ENCODE measurements at regions of chr14 and their contacts with region 1.

Region 1: DNA sequence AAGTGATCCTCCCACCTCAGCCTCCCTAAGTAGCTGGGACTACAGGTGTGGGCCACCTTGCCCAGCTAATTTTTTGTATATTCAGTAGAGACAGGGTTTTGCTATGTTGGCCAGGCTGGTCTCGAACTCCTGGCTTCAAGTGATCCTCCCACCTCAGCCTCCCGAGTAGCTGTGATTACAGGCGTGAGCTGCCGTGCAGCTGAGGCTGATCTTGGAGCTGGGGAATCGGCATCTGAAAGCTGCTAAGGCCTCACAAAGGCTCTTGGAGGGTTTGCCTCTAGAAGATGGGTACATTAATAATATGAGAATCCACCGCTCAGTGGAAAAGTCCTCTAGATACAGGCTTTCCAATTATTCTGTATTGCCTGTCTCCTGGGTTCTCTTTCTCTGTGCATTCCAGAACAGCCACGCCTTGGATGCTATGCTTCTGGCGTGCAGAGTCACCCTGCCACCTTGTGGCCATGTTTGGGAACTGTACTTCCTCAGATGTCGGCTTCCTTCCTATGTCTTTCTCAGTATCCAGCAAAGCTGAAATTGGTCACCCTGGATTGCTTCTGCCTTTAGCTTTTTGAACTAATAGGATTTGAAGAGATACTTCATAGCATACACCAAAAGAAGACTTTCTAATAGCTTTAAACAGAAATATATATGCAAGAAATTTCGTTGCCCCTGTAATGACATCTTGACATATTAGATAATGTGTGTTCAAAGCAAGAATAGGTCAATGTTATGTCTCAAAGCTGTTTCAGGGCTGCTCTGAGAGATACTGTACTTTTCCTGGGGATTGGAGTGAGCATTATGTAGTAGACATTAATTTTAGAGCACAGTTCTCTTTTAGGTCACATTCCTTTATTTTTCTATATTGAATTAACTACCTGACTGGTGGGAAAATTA is 75.4 kb downstream of the SNAPC1 start:
- DNase-seq: peak; percentile 83
- H3K4me3 ChIP-seq: no peak overlapping the region
- H3K27ac ChIP-seq: no peak overlapping the region
- H3K4me1 ChIP-seq: peaks cover 6% of the 10 kb centered on the region
- CTCF ChIP-seq: peak; percentile 99

Region 2: GRCh38 chr14:61296719-61297502 is 540.7 kb before region 1 on chr14:
- CTCF ChIA-PET with region 1: no interaction called
- POLR2A ChIA-PET with region 1: no interaction called
- intact Hi-C with region 1: loop called (anchors 1 kb)
- DNase-seq: peak; percentile 42
- H3K4me3 ChIP-seq: no peak overlapping the region
- H3K27ac ChIP-seq: no peak overlapping the region
- H3K4me1 ChIP-seq: peaks cover 8% of the 10 kb centered on the region
- CTCF ChIP-seq: peak; percentile 89

Region 3: DNA sequence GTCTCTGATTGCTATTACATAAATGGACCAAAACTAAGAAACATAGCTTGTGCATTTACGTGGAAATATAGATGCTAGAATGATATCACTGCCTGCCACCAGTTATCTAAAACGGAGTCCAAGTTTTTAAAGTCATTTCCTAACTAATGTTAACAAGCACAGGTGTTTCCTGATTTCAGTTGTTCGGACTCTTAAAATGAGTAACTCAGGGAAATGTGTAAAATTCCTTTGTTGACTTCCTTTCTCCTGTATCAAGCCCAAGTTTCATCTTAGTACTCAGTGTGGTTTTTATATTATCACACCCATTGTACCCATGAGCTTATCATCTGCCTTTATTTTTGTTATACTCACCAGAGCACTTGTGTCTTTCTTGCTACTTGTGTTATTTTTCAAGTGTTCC is 529.4 kb before region 1 on chr14:
- CTCF ChIA-PET with region 1: no interaction called
- POLR2A ChIA-PET with region 1: no interaction called
- intact Hi-C with region 1: no loop called
- DNase-seq: no peak
- H3K4me3 ChIP-seq: no peak overlapping the region
- H3K27ac ChIP-seq: no peak overlapping the region
- H3K4me1 ChIP-seq: no peaks in the 10 kb centered on the region
- CTCF ChIP-seq: no peak

Region 4: GRCh38 chr14:61456720-61457119 is 380.9 kb before region 1 on chr14:
- CTCF ChIA-PET with region 1: interaction called, 7 read pairs
- POLR2A ChIA-PET with region 1: interaction called, 5 read pairs
- intact Hi-C with region 1: loop called (anchors 1 kb)
- DNase-seq: peak; percentile 89
- H3K4me3 ChIP-seq: no peak overlapping the region
- H3K27ac ChIP-seq: no peak overlapping the region
- H3K4me1 ChIP-seq: peaks cover 6% of the 10 kb centered on the region
- CTCF ChIP-seq: peak; percentile 96

Region 5: GRCh38 chr14:61461808-61462275 is 375.7 kb before region 1 on chr14:
- CTCF ChIA-PET with region 1: interaction called, 7 read pairs
- POLR2A ChIA-PET with region 1: interaction called, 3 read pairs
- intact Hi-C with region 1: loop called (anchors 1 kb)
- DNase-seq: peak; percentile 80
- H3K4me3 ChIP-seq: no peak overlapping the region
- H3K27ac ChIP-seq: no peak overlapping the region
- H3K4me1 ChIP-seq: peaks cover 30% of the 10 kb centered on the region
- CTCF ChIP-seq: peak; percentile 95

Region 6: GRCh38 chr14:61730756-61731373 is 106.7 kb before region 1 on chr14:
- CTCF ChIA-PET with region 1: no interaction called
- POLR2A ChIA-PET with region 1: no interaction called
- intact Hi-C with region 1: loop called (anchors 5 kb)
- DNase-seq: peak; percentile 46
- H3K4me3 ChIP-seq: no peak overlapping the region
- H3K27ac ChIP-seq: peak overlapping the region; percentile 21
- H3K4me1 ChIP-seq: peaks cover 22% of the 10 kb centered on the region
- CTCF ChIP-seq: peak; percentile 93

Measured in OCI-LY7 (cell line).